ENCODE measurements at regions of chr9 and their contacts with region 1.

Region 1: DNA sequence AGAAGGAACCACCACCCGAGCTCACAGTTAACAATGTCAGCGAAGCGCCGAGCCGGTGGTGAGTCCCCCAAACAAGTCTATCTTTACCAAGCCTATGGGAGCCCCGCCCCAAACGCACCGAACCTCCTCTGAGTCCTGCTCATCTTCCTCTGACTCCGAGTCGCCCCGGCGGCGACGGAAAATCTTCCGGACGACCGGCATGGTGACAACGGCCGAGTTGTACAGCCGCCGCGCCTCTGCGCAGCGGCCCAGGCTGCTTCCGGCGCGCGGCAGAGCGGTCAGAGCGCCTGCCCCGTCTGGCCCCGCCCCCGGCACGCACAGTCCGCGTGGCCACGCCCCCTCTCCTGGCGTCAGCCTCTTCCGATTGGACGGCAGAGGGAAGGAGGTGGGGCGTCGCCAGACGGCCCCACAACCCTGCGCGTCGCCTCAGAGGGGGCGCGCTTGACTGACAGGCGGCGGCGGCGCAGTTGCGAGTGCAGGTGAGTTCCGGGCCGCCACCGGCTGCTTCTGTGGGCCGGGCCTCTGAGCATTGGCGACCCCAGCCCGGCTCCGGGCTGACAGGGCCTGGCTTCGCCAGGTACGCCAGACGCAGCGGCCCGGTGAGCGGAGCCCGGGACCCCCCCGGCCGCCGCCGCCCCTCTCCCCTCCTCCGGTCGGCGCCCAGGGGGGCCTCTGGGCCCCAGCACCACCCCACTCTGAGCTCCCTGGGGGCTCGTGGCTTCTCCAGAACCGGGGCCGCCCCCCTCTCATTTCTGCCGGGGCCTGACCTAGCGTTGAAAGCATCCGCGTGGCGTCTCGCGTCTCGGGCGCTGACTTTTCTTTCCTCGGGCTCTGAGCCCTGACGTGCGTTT is at the starts of genes C9orf78 and USP20:
- DNase-seq: peak; percentile 93 to 95 (median 95)
- H3K4me3 ChIP-seq: peak within 1 kb of the TSS; percentile 54 to 88 (median 87)
- H3K4me3 Mint-ChIP-seq: peak within 1 kb of the TSS; percentile 97 to 98
- H3K27ac ChIP-seq: peak within 1 kb of the TSS; percentile 87 to 94
- H3K27ac Mint-ChIP-seq: peak within 1 kb of the TSS; percentile 95 to 98 (median 97)
- H3K4me1 ChIP-seq: peaks cover 20 to 26% of the 10 kb centered on the region in 2 donors
- H3K4me1 Mint-ChIP-seq: peaks cover 32% of the 10 kb centered on the region
- H3K27me3 ChIP-seq: no peaks in the 10 kb centered on the region
- H3K27me3 Mint-ChIP-seq: peaks cover 0 to 3% (median 1%) of the 10 kb centered on the region in 3 donors
- CTCF ChIP-seq: no peak
- polyA plus RNA-seq, gene C9orf78: 53.3 to 82.4 (median 65.5) TPM
- polyA plus RNA-seq, gene USP20: 2.7 to 30.0 (median 5.2) TPM

Region 2: DNA sequence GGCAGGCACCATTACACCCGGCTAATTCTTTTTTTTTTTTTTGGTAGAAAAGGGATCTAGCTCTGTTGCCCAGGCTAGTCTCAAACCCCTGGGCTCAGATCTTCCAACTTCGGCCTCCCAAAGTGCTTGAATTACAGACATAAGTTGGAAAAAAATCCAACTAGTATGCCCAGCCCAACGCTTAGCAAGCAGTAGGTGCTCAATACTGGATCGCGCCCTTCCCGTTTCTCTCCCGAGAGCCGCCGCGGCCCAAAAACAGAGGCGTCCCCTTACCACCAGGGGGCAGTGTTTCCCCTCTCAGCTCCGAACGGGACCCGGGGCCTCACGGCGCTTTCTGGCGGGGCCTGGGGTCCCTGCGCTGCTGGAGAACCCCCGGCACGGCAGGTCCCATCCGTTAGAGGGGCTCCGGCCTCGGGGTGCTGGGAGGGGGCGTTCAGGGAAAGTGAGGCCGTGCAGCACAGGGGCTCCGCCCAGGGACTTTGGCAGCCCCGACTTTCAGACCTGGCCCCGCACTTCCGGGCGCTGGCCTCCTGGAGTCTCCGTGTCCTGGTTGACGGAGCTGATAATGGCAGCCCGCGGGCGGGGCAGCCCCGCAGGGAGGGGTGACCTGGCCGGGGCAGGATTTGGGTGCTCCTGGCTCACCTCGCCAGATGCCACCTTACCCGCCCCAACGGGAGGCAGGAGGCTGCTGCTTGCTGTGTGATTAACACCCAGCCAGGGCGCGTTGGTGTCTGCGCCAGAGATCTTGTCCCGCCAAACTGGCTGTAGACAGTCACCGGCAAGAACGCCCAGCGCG is 97.6 kb before region 1 on chr9:
- intact Hi-C with region 1: no loop called
- DNase-seq: peak; percentile 82 to 85 (median 84)
- H3K4me3 ChIP-seq: peak overlapping the region; percentile 31 to 74 (median 55)
- H3K4me3 Mint-ChIP-seq: peak overlapping the region; percentile 70 to 80
- H3K27ac ChIP-seq: peak overlapping the region in 1 of 2 donors; percentile 75
- H3K27ac Mint-ChIP-seq: peak overlapping the region in 6 of 7 donors; percentile 72 to 92 (median 82)
- H3K4me1 ChIP-seq: peaks cover 6 to 16% of the 10 kb centered on the region in 2 donors
- H3K4me1 Mint-ChIP-seq: peaks cover 16% of the 10 kb centered on the region
- H3K27me3 ChIP-seq: peaks cover 0 to 8% of the 10 kb centered on the region in 2 donors
- H3K27me3 Mint-ChIP-seq: peaks cover 13 to 46% (median 20%) of the 10 kb centered on the region in 3 donors
- CTCF ChIP-seq: peak; percentile 95

Region 3: GRCh38 chr9:129802851-129803675 is 32.2 kb before region 1 on chr9 and contains the start of gene TOR1B:
- intact Hi-C with region 1: loop called in 1 of 2 experiments (anchors 5 kb)
- DNase-seq: peak; percentile 86 to 91 (median 91)
- H3K4me3 ChIP-seq: peak within 1 kb of the TSS; percentile 53 to 80 (median 79)
- H3K4me3 Mint-ChIP-seq: peak within 1 kb of the TSS; percentile 90 to 95
- H3K27ac ChIP-seq: peak within 1 kb of the TSS; percentile 53 to 71
- H3K27ac Mint-ChIP-seq: peak within 1 kb of the TSS; percentile 86 to 96 (median 93)
- H3K4me1 ChIP-seq: peaks cover 33 to 34% of the 10 kb centered on the region in 2 donors
- H3K4me1 Mint-ChIP-seq: peaks cover 35% of the 10 kb centered on the region
- H3K27me3 ChIP-seq: no peaks in the 10 kb centered on the region
- H3K27me3 Mint-ChIP-seq: no peaks in the 10 kb centered on the region
- CTCF ChIP-seq: no peak
- polyA plus RNA-seq, gene TOR1B: 15.8 to 22.5 (median 18.0) TPM